Mammary epithelial cell (primary cell): ENCODE measurements at regions of chr1 and their contacts with region 1.

Region 1: GRCh38 chr1:154878371-154879022 is 8.4 kb upstream of the KCNN3 start:
- DNase-seq: peak; percentile 36
- H3K4me3 ChIP-seq: no peak overlapping the region
- H3K27ac ChIP-seq: no peak overlapping the region
- H3K4me1 ChIP-seq: no peaks in the 10 kb centered on the region
- H3K27me3 ChIP-seq: no peaks in the 10 kb centered on the region
- CTCF ChIP-seq: peak; percentile 78 to 85

Region 2: GRCh38 chr1:154635162-154635561 is 243.3 kb before region 1 on chr1:
- CTCF ChIA-PET with region 1: no interaction called
- dilution Hi-C with region 1: no loop called
- in situ Hi-C with region 1: no loop called
- intact Hi-C with region 1: no loop called
- DNase-seq: no peak
- H3K4me3 ChIP-seq: no peak overlapping the region
- H3K27ac ChIP-seq: no peak overlapping the region
- H3K4me1 ChIP-seq: no peaks in the 10 kb centered on the region
- H3K27me3 ChIP-seq: no peaks in the 10 kb centered on the region
- CTCF ChIP-seq: no peak

Region 3: DNA sequence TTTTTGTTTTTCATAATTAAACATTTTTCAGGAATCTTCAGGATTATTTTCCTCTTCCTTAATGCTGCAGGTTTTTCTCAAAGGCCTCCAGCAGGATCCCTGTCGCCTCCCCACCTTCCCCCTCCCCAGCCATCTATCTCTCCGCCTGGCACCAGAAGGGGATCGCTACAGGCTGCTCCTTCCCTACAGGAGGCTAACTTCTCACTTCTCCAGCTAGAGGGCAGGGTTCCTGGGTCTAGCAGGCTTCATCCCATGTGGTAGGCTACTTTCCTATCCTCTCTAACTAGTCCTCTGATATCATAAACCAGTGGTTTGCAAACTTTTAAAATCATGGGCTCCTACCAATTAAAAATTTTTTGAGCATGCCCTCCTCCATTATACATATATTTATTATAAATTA is 112.5 kb before region 1 on chr1:
- CTCF ChIA-PET with region 1: no interaction called
- dilution Hi-C with region 1: no loop called
- in situ Hi-C with region 1: no loop called
- intact Hi-C with region 1: loop called (anchors 1 kb)
- DNase-seq: no peak
- H3K4me3 ChIP-seq: no peak overlapping the region
- H3K27ac ChIP-seq: no peak overlapping the region
- H3K4me1 ChIP-seq: no peaks in the 10 kb centered on the region
- H3K27me3 ChIP-seq: no peaks in the 10 kb centered on the region
- CTCF ChIP-seq: peak; percentile 50 to 69

Region 4: GRCh38 chr1:154784924-154785531 is 93.5 kb before region 1 on chr1:
- CTCF ChIA-PET with region 1: no interaction called
- dilution Hi-C with region 1: no loop called
- in situ Hi-C with region 1: no loop called
- intact Hi-C with region 1: no loop called
- DNase-seq: no peak
- H3K4me3 ChIP-seq: no peak overlapping the region
- H3K27ac ChIP-seq: no peak overlapping the region
- H3K4me1 ChIP-seq: no peaks in the 10 kb centered on the region
- H3K27me3 ChIP-seq: no peaks in the 10 kb centered on the region
- CTCF ChIP-seq: no peak

Region 5: DNA sequence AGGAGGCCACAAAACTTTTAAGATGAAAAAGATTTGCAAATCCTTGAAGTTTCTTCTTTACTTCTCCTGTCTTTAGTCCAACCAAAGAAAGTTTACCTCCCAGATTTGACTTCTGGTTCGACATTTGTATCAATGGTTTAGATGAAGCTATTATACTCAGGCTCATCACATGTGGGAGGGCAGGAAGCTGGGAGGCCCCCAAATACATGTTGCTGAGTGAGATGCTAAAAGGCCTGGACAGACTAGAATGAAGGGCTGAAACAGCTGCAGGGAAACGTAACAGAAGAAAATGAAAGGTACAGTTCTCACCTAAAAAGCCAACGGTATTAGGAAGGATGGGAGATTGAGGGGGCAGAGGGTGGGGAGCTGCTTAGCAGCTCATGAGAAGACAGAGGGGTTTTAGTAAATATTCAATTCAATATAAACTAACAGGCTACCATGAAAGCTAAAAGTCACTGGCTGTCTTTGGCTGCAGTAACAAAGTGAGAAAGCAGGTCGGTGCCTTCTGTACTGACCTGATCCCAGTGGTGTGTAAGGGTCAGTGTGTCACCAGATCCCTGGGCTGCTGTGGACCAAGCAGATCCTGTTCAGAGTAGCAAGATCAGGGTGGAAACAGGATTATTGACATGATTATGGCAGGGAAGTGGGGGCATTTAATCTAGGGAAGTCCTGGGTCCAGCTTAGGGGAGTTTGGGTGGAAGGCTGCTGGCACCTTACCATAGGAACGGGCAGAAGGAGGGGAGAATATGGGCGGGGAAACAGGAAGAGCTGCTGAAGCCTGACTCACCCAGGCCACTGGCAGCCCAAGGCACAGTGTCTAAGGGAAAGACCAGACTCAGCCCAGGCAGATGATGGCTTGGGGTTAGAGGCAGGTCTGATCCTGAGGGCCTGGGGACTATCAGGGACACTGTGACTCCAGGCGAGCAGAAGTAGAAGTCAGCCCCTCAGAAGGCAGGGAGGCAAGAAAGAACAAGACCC is 68.8 kb before region 1 on chr1:
- CTCF ChIA-PET with region 1: no interaction called
- dilution Hi-C with region 1: no loop called
- in situ Hi-C with region 1: no loop called
- intact Hi-C with region 1: loop called (anchors 5 kb)
- DNase-seq: peak; percentile 60
- H3K4me3 ChIP-seq: no peak overlapping the region
- H3K27ac ChIP-seq: no peak overlapping the region
- H3K4me1 ChIP-seq: peaks cover 25% of the 10 kb centered on the region
- H3K27me3 ChIP-seq: no peaks in the 10 kb centered on the region
- CTCF ChIP-seq: no peak